K562 (cell line): ENCODE measurements at regions of chr12 and their contacts with region 1.

Region 1: GRCh38 chr12:6205144-6205539 is 4.9 kb downstream of the CD9 start:
- DNase-seq: no peak
- ATAC-seq: no peak
- H3K4me3 ChIP-seq: no peak overlapping the region
- H3K27ac ChIP-seq: no peak overlapping the region
- H3K4me1 ChIP-seq: peaks cover 0 to 12% of the 10 kb centered on the region in 2 experiments; a peak in 3 of 5 replicates
- H3K27me3 ChIP-seq: peaks cover 2 to 37% of the 10 kb centered on the region in 2 experiments; a peak in 4 of 5 replicates
- CTCF ChIP-seq: no peak
- EP300 ChIP-seq: no peak
- POLR2A ChIP-seq: no peak
- RAD21 ChIP-seq: no peak

Region 2: GRCh38 chr12:6084261-6084968 is 120.7 kb before region 1 on chr12:
- CTCF ChIA-PET with region 1: no interaction called
- POLR2A ChIA-PET with region 1: no interaction called
- in situ Hi-C with region 1: no loop called
- intact Hi-C with region 1: no loop called
- DNase-seq: no peak
- ATAC-seq: no peak
- H3K4me3 ChIP-seq: no peak overlapping the region
- H3K27ac ChIP-seq: no peak overlapping the region
- H3K4me1 ChIP-seq: no peaks in the 10 kb centered on the region; a peak in 1 of 5 replicates
- H3K27me3 ChIP-seq: peaks cover 12 to 34% of the 10 kb centered on the region in 2 experiments; a peak in 4 of 5 replicates
- CTCF ChIP-seq: no peak
- EP300 ChIP-seq: no peak
- POLR2A ChIP-seq: no peak
- RAD21 ChIP-seq: no peak

Region 3: GRCh38 chr12:6182116-6182898 is 22.8 kb before region 1 on chr12:
- CTCF ChIA-PET with region 1: no interaction called
- POLR2A ChIA-PET with region 1: no interaction called
- in situ Hi-C with region 1: no loop called
- intact Hi-C with region 1: no loop called
- DNase-seq: peak in 2 of 4 experiments; percentile 16 to 23
- ATAC-seq: no peak
- H3K4me3 ChIP-seq: no peak overlapping the region
- H3K27ac ChIP-seq: no peak overlapping the region
- H3K4me1 ChIP-seq: peaks cover 0 to 14% of the 10 kb centered on the region in 2 experiments; a peak in 3 of 5 replicates
- H3K27me3 ChIP-seq: peaks cover 0 to 11% of the 10 kb centered on the region in 2 experiments; a peak in 1 of 5 replicates
- CTCF ChIP-seq: no peak
- EP300 ChIP-seq: no peak
- POLR2A ChIP-seq: no peak
- RAD21 ChIP-seq: no peak

Region 4: GRCh38 chr12:6278439-6279255 is 73.5 kb after region 1 on chr12:
- CTCF ChIA-PET with region 1: interaction called, 4 read pairs
- POLR2A ChIA-PET with region 1: interaction called, 3 read pairs
- in situ Hi-C with region 1: loop called (anchors 5 kb)
- intact Hi-C with region 1: no loop called
- DNase-seq: peak; percentile 84 to 93 (median 90)
- ATAC-seq: peak; percentile 99
- H3K4me3 ChIP-seq: peak overlapping the region; percentile 40
- H3K27ac ChIP-seq: peak overlapping the region; percentile 25; the same call in 2 of the 3 replicates
- H3K4me1 ChIP-seq: peaks cover 6 to 20% of the 10 kb centered on the region in 2 experiments; a peak in 4 of 5 replicates
- H3K27me3 ChIP-seq: peaks cover 6 to 7% of the 10 kb centered on the region in 2 experiments; a peak in 4 of 5 replicates
- CTCF ChIP-seq: peak; percentile 58 to 84 (median 75)
- EP300 ChIP-seq: 0 out of 2 replicates have a peak, but pooled peaks have one; percentile 10
- POLR2A ChIP-seq: no peak
- RAD21 ChIP-seq: peak; percentile 88 to 92